ENCODE measurements at regions of chr16 and their contacts with region 1.

Region 1: DNA sequence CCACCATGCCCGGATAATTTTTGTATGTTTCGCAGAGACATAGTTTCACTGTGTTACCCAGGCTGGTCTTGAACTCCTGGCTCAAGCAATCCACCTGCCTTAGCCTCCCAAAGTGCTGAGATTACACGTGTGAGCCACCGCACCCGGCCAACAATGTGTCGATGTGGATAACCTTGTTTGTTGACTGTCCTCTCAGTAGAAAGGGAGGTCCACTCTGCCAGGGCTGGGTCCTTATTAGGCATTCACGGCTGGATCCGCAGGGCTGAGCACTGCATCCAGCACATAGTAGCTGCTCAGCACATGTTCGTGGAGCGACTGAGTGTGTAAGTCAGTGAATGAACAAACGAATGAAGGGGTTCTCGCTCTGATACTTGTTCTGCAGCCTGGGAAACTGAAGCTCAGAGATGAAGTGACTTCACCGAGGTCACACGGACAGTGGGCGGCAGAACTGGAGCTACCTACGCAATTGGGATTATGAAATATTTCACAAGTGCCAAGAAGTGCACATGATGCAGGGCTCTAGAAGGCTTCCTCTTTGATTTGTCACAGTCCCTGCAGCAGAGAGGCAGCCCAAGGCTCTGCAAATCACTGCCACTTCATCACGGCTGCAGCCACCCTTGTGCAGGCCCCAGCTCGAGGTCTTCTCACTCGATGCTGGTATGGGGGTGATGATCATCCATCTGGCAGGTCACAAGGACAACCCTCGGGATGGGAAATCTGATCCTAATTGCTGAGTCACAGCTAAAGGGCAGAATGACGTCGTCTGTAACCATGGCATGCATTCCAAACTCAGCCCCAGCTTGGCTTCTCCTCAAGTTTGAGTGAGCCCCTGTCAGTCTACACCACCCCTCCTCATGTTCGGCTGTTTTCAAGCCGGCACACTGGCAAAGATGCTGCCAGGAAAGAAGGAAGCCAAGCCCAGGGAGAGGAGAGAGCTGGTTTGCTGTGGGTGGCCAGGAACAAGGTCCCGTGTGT is 28.0 kb upstream of the SNN start:
- DNase-seq: peak; percentile 93
- H3K4me3 ChIP-seq: no peak overlapping the region
- H3K27ac ChIP-seq: peak overlapping the region; percentile 78 to 88 (median 80)
- H3K4me1 ChIP-seq: peaks cover 0 to 22% (median 19%) of the 10 kb centered on the region in 4 donors
- H3K27me3 ChIP-seq: no peaks in the 10 kb centered on the region
- CTCF ChIP-seq: no peak
- EP300 ChIP-seq: peak in 3 of 4 donors; percentile 43 to 83 (median 82)
- POLR2A ChIP-seq: no peak

Region 2: GRCh38 chr16:10964039-10964890 is 675.9 kb before region 1 on chr16:
- intact Hi-C with region 1: loop called (anchors 5 kb)
- DNase-seq: peak; percentile 89
- H3K4me3 ChIP-seq: no peak overlapping the region
- H3K27ac ChIP-seq: peak overlapping the region; percentile 10 to 71 (median 37)
- H3K4me1 ChIP-seq: peaks cover 0 to 25% (median 17%) of the 10 kb centered on the region in 4 donors
- H3K27me3 ChIP-seq: no peaks in the 10 kb centered on the region
- CTCF ChIP-seq: peak; percentile 91 to 95 (median 94)
- EP300 ChIP-seq: no peak
- POLR2A ChIP-seq: no peak

Region 3: GRCh38 chr16:11407047-11407982 is 232.9 kb before region 1 on chr16:
- intact Hi-C with region 1: loop called (anchors 2 kb)
- DNase-seq: peak; percentile 82
- H3K4me3 ChIP-seq: no peak overlapping the region
- H3K27ac ChIP-seq: no peak overlapping the region
- H3K4me1 ChIP-seq: peaks cover 0 to 4% (median 0%) of the 10 kb centered on the region in 4 donors
- H3K27me3 ChIP-seq: no peaks in the 10 kb centered on the region
- CTCF ChIP-seq: peak; percentile 38 to 49 (median 44)
- EP300 ChIP-seq: no peak
- POLR2A ChIP-seq: no peak

Region 4: GRCh38 chr16:11534262-11534661 is 106.0 kb before region 1 on chr16:
- intact Hi-C with region 1: loop called (anchors 2 kb)
- DNase-seq: no peak
- H3K4me3 ChIP-seq: no peak overlapping the region
- H3K27ac ChIP-seq: no peak overlapping the region
- H3K4me1 ChIP-seq: no peaks in the 10 kb centered on the region
- H3K27me3 ChIP-seq: no peaks in the 10 kb centered on the region
- CTCF ChIP-seq: no peak
- EP300 ChIP-seq: no peak
- POLR2A ChIP-seq: no peak

Region 5: GRCh38 chr16:11557801-11558200 is 82.4 kb before region 1 on chr16:
- intact Hi-C with region 1: loop called (anchors 10 kb)
- DNase-seq: no peak
- H3K4me3 ChIP-seq: no peak overlapping the region
- H3K27ac ChIP-seq: peak overlapping the region; percentile 37 to 57 (median 50)
- H3K4me1 ChIP-seq: peaks cover 0 to 28% (median 10%) of the 10 kb centered on the region in 4 donors
- H3K27me3 ChIP-seq: no peaks in the 10 kb centered on the region
- CTCF ChIP-seq: no peak
- EP300 ChIP-seq: no peak
- POLR2A ChIP-seq: no peak

Region 6: GRCh38 chr16:11715246-11715947 is 75.2 kb after region 1 on chr16:
- intact Hi-C with region 1: loop called (anchors 5 kb)
- DNase-seq: no peak
- H3K4me3 ChIP-seq: no peak overlapping the region
- H3K27ac ChIP-seq: peak overlapping the region in 2 of 4 donors; percentile 45 to 54
- H3K4me1 ChIP-seq: peaks cover 0 to 42% (median 39%) of the 10 kb centered on the region in 4 donors
- H3K27me3 ChIP-seq: no peaks in the 10 kb centered on the region
- CTCF ChIP-seq: no peak
- EP300 ChIP-seq: no peak
- POLR2A ChIP-seq: no peak

Region 7: DNA sequence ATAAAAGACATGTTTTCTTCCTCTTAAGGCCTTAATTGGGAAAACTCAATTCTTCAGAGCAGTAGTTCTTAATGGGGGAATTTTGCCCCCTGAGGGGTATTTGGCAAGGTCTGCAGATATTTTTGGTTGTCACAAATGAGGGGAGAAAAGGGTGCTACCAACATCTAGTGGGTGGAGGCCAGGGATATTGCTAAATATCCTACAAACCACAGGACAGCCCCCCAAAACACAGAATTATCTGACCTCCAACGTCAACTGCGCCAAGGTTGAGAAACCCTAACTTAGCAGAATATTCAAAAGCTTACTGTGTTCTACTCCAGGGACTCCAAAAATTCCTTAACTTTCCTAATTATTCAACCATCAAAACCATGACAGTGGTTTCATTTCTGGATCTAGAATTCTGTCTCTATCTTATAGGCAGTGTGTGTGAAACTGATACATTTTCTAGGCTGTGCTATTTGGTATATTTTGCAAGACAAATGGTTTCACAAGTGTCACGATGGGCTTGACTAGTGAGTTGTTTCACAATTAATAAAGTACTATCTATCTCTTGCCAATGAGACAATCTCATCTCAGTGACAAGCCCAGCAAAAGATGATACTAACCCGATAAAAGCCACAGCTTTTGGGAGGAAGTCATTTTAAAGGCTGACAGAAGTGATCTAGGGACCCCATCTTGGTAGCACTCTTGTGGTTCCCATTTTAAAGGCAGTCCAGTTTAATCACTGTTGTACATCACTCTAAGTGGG is 87.8 kb after region 1 on chr16:
- intact Hi-C with region 1: no loop called
- DNase-seq: no peak
- H3K4me3 ChIP-seq: no peak overlapping the region
- H3K27ac ChIP-seq: no peak overlapping the region
- H3K4me1 ChIP-seq: peaks cover 0 to 16% (median 8%) of the 10 kb centered on the region in 4 donors
- H3K27me3 ChIP-seq: no peaks in the 10 kb centered on the region
- CTCF ChIP-seq: no peak
- EP300 ChIP-seq: no peak
- POLR2A ChIP-seq: no peak